PC-9 (cell line): ENCODE measurements at regions of chr13 and their contacts with region 1.

Region 1: DNA sequence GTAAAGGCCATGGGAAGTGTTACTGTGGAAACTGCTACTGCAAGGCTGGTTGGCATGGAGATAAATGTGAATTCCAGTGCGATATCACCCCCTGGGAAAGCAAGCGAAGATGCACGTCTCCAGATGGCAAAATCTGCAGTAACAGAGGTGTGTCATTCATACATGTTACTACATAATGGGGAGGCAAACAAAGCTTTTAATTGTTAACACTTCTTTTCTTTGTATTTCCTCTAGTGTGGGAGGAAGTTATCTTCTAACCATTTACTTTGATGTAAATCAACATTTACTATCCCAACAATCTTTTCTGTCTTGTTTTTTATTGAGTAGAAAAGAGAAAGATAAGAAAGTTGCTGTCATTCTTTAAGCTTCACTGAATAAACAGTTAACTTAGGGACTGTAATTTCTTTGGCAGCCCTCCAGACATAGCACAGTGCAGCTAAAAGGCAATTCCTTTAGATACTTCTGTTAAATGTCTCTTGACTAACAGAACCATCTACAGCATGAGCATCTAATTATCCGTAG is 126.9 kb downstream of the ITGBL1 start:
- DNase-seq: no peak
- H3K4me3 ChIP-seq: no peak overlapping the region
- H3K27ac ChIP-seq: no peak overlapping the region
- H3K4me1 ChIP-seq: peaks cover 24% of the 10 kb centered on the region
- H3K27me3 ChIP-seq: no peaks in the 10 kb centered on the region
- CTCF ChIP-seq: no peak

Region 2: DNA sequence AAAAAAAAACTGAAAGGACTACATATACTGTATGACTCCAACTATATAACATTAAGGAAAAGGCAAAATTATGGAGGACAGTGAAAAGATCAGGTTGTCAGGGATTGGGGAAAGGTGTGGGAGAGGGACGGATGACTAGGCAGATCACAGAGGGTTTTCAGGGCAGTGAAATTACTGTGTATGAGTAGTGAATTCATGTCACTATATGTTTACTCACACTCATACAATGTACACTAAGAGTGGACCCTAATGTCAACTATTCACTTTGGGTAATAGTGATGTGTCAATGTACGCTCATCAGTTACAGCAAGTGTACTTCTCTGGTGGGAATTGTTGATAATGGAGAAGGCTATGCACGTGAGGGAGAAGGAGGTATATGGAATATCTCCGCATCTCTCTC is 17.5 kb after region 1 on chr13:
- CTCF ChIA-PET with region 1: no interaction called
- POLR2A ChIA-PET with region 1: interaction called, 13 read pairs
- intact Hi-C with region 1: no loop called
- DNase-seq: no peak
- H3K4me3 ChIP-seq: no peak overlapping the region
- H3K27ac ChIP-seq: no peak overlapping the region
- H3K4me1 ChIP-seq: no peaks in the 10 kb centered on the region
- H3K27me3 ChIP-seq: no peaks in the 10 kb centered on the region
- CTCF ChIP-seq: no peak

Region 3: GRCh38 chr13:101611491-101612475 is 32.4 kb after region 1 on chr13:
- CTCF ChIA-PET with region 1: no interaction called
- POLR2A ChIA-PET with region 1: no interaction called
- intact Hi-C with region 1: no loop called
- DNase-seq: no peak
- H3K4me3 ChIP-seq: no peak overlapping the region
- H3K27ac ChIP-seq: no peak overlapping the region
- H3K4me1 ChIP-seq: no peaks in the 10 kb centered on the region
- H3K27me3 ChIP-seq: no peaks in the 10 kb centered on the region
- CTCF ChIP-seq: no peak

Region 4: DNA sequence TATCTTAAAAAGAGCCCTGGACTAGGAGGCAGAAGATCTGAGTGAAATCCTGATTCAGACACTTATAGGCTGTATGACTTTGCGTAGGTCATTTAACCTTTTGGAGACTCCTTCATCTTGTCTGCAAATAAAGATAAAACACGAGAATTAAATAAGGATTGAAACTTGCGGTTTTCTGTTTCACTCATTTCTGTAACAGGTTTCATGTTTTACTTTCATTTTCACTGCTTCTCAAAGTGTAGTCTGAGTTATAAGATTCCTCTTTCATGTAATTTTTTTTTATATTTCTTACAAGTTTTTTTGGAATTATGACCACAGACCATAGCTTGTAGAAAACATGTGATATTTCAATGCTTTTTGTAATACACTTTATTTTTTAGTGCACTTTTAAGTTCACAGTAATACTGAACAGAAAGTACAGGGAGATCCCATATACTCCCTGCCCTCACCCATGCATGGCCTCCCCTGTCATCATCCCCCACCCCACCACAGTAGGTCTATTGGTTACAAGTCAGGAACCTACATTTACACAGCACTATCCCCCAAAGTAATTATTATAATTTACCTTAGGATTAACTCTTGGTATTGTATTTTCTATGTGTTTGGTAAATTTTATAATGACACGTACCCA is 47.7 kb after region 1 on chr13:
- CTCF ChIA-PET with region 1: no interaction called
- POLR2A ChIA-PET with region 1: no interaction called
- intact Hi-C with region 1: loop called (anchors 5 kb)
- DNase-seq: no peak
- H3K4me3 ChIP-seq: no peak overlapping the region
- H3K27ac ChIP-seq: no peak overlapping the region
- H3K4me1 ChIP-seq: peaks cover 50% of the 10 kb centered on the region
- H3K27me3 ChIP-seq: no peaks in the 10 kb centered on the region
- CTCF ChIP-seq: no peak

Region 5: GRCh38 chr13:103291798-103292572 is 1712.6 kb after region 1 on chr13:
- CTCF ChIA-PET with region 1: no interaction called
- POLR2A ChIA-PET with region 1: no interaction called
- intact Hi-C with region 1: no loop called
- DNase-seq: no peak
- H3K4me3 ChIP-seq: no peak overlapping the region
- H3K27ac ChIP-seq: no peak overlapping the region
- H3K4me1 ChIP-seq: no peaks in the 10 kb centered on the region
- H3K27me3 ChIP-seq: no peaks in the 10 kb centered on the region
- CTCF ChIP-seq: no peak